ENCODE measurements at regions of chr7 and their contacts with region 1.

Region 1: GRCh38 chr7:127708788-127709187 is 56.8 kb downstream of the SND1 start:
- DNase-seq: peak; percentile 56
- H3K4me3 ChIP-seq: no peak overlapping the region
- H3K27ac ChIP-seq: no peak overlapping the region
- H3K4me1 ChIP-seq: peaks cover 12% of the 10 kb centered on the region
- H3K27me3 ChIP-seq: no peaks in the 10 kb centered on the region
- CTCF ChIP-seq: peak; percentile 72 to 76

Region 2: DNA sequence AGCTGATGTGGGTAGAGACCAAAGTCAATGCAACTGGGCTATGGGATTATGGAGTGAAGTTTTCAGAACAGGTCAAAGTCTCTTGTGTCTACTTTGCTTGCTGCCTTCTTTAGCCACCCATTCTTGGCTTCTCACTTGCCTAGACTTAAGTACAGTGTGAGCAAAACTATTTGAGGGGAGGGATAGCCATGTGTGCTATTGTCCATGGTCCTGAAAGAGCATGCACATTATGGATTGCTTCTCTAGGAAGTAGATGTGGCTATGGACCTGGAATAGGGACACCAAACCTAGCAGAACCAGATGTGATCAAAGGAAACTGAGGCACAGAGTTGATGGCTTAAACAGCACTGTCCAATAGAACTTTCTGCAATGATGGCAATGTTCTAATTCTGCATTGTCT is 234.3 kb before region 1 on chr7:
- CTCF ChIA-PET with region 1: no interaction called
- dilution Hi-C with region 1: no loop called
- in situ Hi-C with region 1: no loop called
- intact Hi-C with region 1: no loop called
- DNase-seq: peak; percentile 3
- H3K4me3 ChIP-seq: no peak overlapping the region
- H3K27ac ChIP-seq: no peak overlapping the region
- H3K4me1 ChIP-seq: no peaks in the 10 kb centered on the region
- H3K27me3 ChIP-seq: peaks cover 4% of the 10 kb centered on the region
- CTCF ChIP-seq: no peak

Region 3: DNA sequence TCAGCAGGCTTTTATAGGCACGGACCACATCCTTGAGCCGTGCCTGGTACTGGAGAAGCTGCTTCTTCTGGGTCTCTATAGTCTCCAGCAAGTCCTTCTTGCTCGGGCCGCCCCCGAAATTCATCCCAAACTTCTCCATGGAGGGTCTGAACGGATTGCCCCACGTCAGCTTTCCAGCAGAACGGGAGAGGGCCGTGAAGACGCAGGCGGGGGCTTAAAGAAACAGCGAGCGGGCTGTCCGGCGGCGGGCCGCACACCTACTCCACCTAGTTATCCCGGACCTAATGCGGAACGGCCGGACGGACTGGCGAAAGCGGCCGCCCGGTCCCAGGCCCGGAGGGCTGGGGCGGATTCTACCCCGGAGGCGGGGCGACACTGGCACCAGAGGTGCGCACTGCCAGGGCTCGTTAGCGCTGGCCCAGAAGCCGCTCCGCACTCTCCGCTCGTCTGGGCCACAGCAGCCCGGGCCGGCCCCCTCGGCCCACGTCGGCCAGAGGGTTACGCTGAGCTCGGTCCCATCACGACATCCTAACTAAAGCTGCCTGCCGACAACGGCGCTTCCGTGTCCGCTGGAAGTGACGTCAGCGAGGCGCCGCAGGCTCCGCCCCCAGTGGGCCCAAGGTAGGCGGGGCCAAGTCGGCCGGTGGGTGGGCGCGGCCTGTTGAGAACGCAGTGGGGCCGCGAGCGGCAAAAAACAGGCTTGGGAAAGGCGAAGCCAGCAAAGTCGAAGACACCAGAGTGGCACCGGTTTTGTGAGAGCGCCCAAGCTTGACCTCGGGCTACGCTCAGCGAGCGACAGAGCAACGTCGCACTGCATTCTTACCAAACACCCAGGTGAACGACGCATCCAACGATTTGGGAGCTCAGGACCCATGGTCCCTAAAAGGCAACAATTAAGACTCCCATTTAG is 123.5 kb before region 1 on chr7 and contains the start of gene GCC1:
- CTCF ChIA-PET with region 1: no interaction called
- dilution Hi-C with region 1: no loop called
- in situ Hi-C with region 1: no loop called
- intact Hi-C with region 1: loop called (anchors 5 kb)
- DNase-seq: peak; percentile 81
- H3K4me3 ChIP-seq: peak within 1 kb of the TSS; percentile 54 to 73 (median 69)
- H3K27ac ChIP-seq: peak within 1 kb of the TSS; percentile 70
- H3K4me1 ChIP-seq: peaks cover 24% of the 10 kb centered on the region
- H3K27me3 ChIP-seq: no peaks in the 10 kb centered on the region
- CTCF ChIP-seq: no peak
- total RNA-seq, gene GCC1: 22.3 to 25.4 TPM

Region 4: GRCh38 chr7:127651556-127652332 is 57.0 kb before region 1 on chr7 and contains the start of gene SND1:
- CTCF ChIA-PET with region 1: interaction called, 4 read pairs
- dilution Hi-C with region 1: no loop called
- in situ Hi-C with region 1: no loop called
- intact Hi-C with region 1: loop called (anchors 2 kb)
- DNase-seq: peak; percentile 99
- H3K4me3 ChIP-seq: peak within 1 kb of the TSS; percentile 80 to 94 (median 82)
- H3K27ac ChIP-seq: peak within 1 kb of the TSS; percentile 92
- H3K4me1 ChIP-seq: peaks cover 28% of the 10 kb centered on the region
- H3K27me3 ChIP-seq: no peaks in the 10 kb centered on the region
- CTCF ChIP-seq: no peak
- total RNA-seq, gene SND1: 196 to 234 TPM

Region 5: DNA sequence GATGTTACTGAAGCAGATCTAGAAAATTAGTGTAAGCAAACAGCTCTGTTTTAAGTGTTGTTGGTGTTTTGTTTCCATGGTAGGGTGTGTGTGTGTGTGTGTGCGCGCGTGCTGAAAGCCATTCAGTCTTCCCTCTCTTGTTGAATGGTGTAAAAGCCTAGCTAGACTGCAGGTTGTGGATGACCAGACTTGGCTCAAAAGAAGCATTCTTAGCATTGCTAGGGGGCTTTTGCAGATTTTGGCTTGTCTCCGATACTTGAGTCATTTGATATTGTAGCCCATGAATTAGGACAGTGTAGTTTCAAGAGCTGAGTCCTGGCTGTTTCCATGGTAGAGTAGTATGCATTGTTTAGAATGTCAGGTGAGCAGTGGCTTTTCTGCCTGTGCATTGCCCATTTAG is 42.3 kb after region 1 on chr7:
- CTCF ChIA-PET with region 1: no interaction called
- dilution Hi-C with region 1: no loop called
- in situ Hi-C with region 1: no loop called
- intact Hi-C with region 1: no loop called
- DNase-seq: peak; percentile 46
- H3K4me3 ChIP-seq: no peak overlapping the region
- H3K27ac ChIP-seq: no peak overlapping the region
- H3K4me1 ChIP-seq: no peaks in the 10 kb centered on the region
- H3K27me3 ChIP-seq: no peaks in the 10 kb centered on the region
- CTCF ChIP-seq: no peak

Region 6: GRCh38 chr7:128135515-128136214 is 426.9 kb after region 1 on chr7:
- CTCF ChIA-PET with region 1: interaction called, 3 read pairs
- dilution Hi-C with region 1: no loop called
- in situ Hi-C with region 1: no loop called
- intact Hi-C with region 1: loop called (anchors 10 kb)
- DNase-seq: peak; percentile 45
- H3K4me3 ChIP-seq: peak overlapping the region; percentile 62 to 66 (median 64)
- H3K27ac ChIP-seq: no peak overlapping the region
- H3K4me1 ChIP-seq: peaks cover 13% of the 10 kb centered on the region
- H3K27me3 ChIP-seq: no peaks in the 10 kb centered on the region
- CTCF ChIP-seq: peak; percentile 57 to 63